GM10248 (cell line): ENCODE measurements at regions of chr5 and their contacts with region 1.

Region 1: DNA sequence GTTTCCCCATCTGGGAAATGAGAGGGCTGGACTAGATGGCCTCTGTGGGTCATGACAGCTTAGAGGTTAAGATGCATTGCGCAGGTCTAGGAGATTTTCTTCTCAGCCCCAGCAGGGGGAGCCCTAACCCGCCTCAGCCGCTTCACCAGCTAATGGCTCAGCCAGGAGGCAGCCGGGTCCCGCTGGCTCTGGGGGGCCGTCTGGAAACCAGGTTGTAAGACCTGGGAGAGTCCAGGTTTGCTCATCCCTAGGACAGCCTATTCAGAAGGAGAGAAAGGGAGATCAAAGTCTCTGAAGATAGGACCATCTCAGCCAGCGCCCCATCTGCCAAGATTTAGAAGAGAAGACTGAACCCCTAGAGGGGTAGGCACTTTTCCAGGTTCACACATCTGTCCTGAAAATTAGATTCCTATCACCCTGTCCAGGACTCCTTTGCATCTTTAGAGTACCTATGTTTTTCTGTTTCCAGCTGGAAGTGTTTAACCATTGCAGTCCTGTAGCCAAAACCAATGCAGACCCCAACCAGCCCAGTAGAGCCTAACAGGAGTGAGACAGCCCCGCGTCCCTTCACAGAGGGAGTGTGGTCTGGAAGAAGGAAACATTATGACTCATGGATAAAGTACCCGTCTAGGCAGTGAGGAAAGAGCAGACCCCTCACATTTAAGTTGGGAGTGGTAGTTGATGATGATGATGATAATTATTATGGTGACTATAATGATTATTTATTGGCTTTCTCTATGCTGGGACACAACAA is 27.5 kb downstream of the SPARC start:
- DNase-seq: peak; percentile 82
- CTCF ChIP-seq: peak; percentile 67

Region 2: DNA sequence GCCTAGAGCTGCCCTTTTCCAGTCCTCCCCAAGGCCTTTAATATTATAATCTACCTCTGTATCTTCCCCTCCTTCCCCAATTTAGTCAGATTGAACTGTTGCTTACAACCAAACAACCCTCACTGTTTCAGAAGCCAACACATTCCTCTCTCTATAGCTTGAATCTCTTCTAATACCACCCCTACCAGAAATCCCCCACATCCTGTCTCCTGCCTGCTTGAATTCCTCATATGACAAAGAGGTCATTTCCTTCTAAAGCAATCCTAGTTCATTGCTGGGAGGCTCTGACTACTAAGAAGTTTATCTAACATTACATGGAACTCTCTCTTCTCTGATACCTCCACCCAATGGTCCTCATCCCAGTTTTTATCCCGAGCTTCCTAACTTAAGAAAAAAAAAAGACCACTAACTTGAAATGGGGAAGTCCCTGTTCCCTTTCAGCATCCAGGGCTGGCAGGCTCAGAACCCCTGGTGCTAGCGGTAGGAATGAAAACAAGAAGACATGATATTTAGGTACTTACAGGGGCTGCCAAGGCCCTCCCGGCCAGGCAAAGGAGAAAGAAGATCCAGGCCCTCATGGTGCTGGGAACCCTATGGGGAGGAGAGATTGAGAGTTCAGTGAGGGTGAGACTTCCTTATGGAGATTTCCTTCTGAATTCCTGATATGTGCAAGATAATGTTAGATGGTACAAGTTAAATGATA is 16.6 kb after region 1 on chr5:
- CTCF ChIA-PET with region 1: interaction called, 72 read pairs
- POLR2A ChIA-PET with region 1: no interaction called
- DNase-seq: no peak
- CTCF ChIP-seq: no peak

Region 3: GRCh38 chr5:151686674-151687407 is 27.7 kb after region 1 on chr5 and contains the start of gene SPARC:
- CTCF ChIA-PET with region 1: interaction called, 18 read pairs
- POLR2A ChIA-PET with region 1: no interaction called
- DNase-seq: peak; percentile 45
- CTCF ChIP-seq: no peak

Region 4: GRCh38 chr5:151708126-151708525 is 48.9 kb after region 1 on chr5:
- CTCF ChIA-PET with region 1: interaction called, 14 read pairs
- POLR2A ChIA-PET with region 1: no interaction called
- DNase-seq: no peak
- CTCF ChIP-seq: no peak

Region 5: DNA sequence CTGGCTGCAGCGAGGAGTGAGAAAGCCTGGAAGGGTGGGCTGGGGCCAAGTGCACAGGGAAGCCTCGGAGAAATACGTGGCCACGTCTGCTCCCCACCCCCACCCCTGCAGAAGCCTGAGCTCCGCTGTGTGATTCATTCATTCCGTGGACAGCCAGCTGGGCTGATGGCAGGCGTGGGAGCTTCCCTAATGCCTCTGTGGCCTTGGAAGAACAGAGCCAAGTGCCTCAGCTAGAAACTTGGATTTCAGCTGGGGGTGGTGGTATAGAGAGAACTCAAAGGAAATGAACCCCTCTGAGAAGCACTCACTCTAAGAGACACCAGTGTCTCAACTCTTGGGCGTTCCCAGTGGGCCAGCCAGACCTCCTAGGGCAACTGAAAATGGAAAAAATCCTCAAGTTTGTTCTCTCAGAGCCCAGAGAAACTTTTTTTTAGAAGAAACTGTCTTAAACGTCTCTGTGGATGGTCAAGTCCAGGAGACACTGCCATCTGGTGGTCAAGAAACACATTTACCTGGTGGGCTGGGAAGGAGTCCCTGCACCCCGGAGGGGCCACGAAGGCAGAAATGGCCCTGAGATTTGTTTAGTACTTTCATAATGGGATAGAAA is 81.3 kb after region 1 on chr5:
- CTCF ChIA-PET with region 1: interaction called, 363 read pairs
- POLR2A ChIA-PET with region 1: no interaction called
- DNase-seq: peak; percentile 76
- CTCF ChIP-seq: peak; percentile 79

Region 6: DNA sequence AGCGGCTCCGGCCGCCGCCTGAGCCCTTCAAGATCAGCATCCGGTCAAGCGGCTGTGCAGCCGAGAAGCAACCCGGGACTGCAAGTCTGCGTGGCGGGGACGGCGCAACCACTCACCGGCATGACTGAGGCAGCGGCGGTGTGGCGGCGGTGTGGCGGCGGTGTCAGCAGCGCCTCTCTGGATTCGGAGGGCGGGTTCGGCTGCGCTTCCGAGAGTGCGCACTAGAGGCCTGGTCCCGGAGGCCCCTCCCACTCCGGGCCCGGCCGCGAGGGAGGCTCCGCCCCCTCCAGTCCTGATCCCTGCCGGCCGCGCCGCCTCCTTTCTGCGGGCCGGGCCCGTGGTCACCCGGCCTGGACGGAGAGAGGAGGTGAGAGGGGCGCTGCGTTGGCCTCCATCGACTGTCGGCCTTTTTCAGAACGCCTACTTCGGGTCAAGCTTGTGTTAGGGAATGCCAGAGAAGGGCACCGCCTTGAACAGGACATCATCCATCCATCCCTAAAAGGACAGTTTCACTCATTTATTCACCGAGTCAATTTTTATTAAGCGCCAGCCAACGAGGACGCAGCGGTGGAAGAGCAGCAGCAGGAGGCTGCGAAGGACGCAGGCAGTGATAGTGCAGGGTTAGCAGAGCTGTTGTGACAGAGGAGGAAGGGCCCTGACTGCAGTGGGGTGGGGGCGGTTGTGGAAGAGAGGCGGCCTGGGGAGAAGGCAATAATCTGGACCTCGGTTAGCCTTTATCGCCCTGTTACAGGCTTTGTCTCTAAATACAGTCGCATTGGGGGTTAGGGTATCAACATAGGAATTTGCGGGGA is 99.5 kb after region 1 on chr5 and contains the start of gene ATOX1:
- CTCF ChIA-PET with region 1: interaction called, 15 read pairs
- POLR2A ChIA-PET with region 1: no interaction called
- DNase-seq: peak; percentile 99
- CTCF ChIP-seq: no peak